Uterus (tissue), 4 donors: ENCODE measurements at regions of chr1 and their contacts with region 1.

Region 1: GRCh38 chr1:109979489-109980091 is 5.0 kb upstream of the AHCYL1 start:
- DNase-seq: peak in 1 of 2 donors; percentile 60
- H3K4me3 ChIP-seq: no peak overlapping the region
- H3K27ac ChIP-seq: peak overlapping the region; percentile 49 to 50
- H3K4me1 ChIP-seq: no peaks in the 10 kb centered on the region
- H3K27me3 ChIP-seq: no peaks in the 10 kb centered on the region
- CTCF ChIP-seq: no peak
- POLR2A ChIP-seq: no peak

Region 2: DNA sequence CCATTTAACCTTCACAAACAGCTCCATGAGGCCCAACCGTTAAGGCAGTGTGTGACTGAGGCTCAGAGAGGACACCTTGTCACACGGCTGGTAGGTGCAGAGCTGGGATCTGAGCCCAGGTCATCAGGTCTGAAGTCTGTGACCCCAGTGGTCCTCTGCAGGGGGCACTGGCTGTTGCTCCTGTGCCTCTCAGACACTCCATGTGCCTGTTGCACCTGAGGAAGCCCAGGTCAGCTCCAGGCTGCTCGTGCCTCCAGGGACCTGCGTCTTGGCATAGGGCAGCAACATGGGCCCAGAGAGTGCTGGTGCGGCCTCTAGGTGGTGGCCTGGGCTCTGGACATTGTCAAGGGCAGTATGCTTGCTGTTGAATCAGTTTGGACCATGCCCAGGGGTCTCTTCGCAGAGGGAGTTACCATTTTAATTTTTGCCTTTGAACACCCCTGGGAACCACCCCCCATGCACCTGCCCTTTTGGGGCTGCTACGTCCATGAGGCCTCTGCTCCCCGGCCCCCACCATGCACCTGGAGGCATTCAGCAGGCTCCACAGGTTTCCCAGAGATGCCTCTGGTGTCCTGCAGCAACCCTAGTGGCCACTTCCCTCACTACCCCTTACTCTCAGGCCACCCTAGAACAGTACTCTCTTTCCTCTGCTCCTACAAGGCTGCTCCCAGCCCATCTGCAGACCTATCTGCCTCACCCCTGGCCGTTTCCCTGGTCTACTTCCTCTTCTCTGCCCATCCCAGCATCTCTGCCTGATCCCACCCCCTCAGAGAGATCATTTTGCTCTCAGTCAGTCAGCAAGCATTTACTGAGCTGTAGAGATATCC is 190.7 kb before region 1 on chr1:
- intact Hi-C with region 1: loop called (anchors 5 kb)
- DNase-seq: peak; percentile 12 to 13
- H3K4me3 ChIP-seq: no peak overlapping the region
- H3K27ac ChIP-seq: no peak overlapping the region
- H3K4me1 ChIP-seq: peaks cover 0 to 18% of the 10 kb centered on the region in 2 donors
- H3K27me3 ChIP-seq: no peaks in the 10 kb centered on the region
- CTCF ChIP-seq: no peak
- POLR2A ChIP-seq: no peak

Region 3: GRCh38 chr1:109906160-109906838 is 73.3 kb before region 1 on chr1:
- intact Hi-C with region 1: no loop called
- DNase-seq: no peak
- H3K4me3 ChIP-seq: no peak overlapping the region
- H3K27ac ChIP-seq: no peak overlapping the region
- H3K4me1 ChIP-seq: peaks cover 0 to 8% of the 10 kb centered on the region in 2 donors
- H3K27me3 ChIP-seq: no peaks in the 10 kb centered on the region
- CTCF ChIP-seq: no peak
- POLR2A ChIP-seq: no peak